Upper lobe of right lung (tissue), 1 donor: ENCODE measurements at regions of chr6 and their contacts with region 1.

Region 1: GRCh38 chr6:44096612-44097011 is 30.6 kb downstream of the MRPL14 start:
- DNase-seq: peak; percentile 82
- ATAC-seq: peak; percentile 89
- H3K4me3 ChIP-seq: no peak overlapping the region
- H3K27ac ChIP-seq: no peak overlapping the region
- H3K4me1 ChIP-seq: no peaks in the 10 kb centered on the region
- H3K27me3 ChIP-seq: no peaks in the 10 kb centered on the region
- CTCF ChIP-seq: peak; percentile 88

Region 2: DNA sequence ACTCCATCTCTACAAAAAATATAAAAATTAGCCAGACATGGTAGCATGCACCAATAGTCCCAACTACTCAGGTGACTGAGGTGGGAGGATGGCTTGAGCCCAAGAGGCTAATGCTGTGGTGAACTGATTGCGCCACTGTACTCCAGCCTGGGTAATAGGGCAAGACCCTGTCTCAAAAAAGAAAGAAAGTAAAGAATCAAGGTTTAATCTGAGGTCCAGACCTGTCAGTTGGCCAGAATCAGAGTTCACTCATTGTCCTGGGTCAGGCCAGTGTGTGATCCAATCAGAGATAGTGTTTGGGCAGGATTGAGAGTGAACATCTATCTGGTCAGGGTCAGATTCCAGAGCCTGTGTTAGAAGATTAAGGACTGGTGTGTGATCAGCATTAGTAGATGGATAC is 46.2 kb after region 1 on chr6:
- intact Hi-C with region 1: loop called (anchors 5 kb)
- DNase-seq: no peak
- ATAC-seq: no peak
- H3K4me3 ChIP-seq: no peak overlapping the region
- H3K27ac ChIP-seq: no peak overlapping the region
- H3K4me1 ChIP-seq: no peaks in the 10 kb centered on the region
- H3K27me3 ChIP-seq: no peaks in the 10 kb centered on the region
- CTCF ChIP-seq: no peak

Region 3: DNA sequence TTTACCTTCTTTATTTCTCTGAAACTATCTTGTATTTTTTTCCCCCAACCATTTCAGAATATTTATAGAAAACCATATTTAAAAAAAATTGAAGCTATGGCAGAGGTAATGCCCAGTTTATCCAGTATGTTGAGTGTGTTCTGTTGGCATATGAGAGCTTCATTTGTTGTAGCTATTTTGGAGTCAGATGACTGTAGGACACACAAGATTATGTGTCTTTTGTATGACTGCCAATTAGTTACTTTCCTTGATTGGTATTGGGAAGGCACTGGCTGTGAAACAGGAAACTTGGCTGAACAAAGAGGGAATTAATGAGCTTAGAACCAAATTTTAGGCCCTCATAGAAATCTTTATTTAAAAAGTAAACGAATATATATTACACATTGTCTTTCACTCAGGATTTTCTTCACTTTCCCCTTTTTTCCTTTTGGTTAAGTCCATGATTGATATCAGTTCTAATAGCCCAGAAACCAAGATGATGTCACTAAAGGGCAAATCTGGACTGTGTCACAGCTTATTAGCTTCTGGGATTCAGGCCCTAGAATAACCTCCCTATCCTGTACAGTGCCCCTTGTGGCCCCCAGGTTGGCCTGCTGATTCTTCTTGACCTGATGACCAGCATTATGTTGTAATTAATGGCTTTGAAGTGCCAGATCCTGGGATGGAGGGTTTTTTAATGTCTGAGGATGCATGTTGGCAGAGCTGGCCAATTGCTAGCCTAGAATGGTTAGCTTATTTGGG is 301.0 kb after region 1 on chr6:
- intact Hi-C with region 1: no loop called
- DNase-seq: no peak
- ATAC-seq: no peak
- H3K4me3 ChIP-seq: no peak overlapping the region
- H3K27ac ChIP-seq: no peak overlapping the region
- H3K4me1 ChIP-seq: no peaks in the 10 kb centered on the region
- H3K27me3 ChIP-seq: no peaks in the 10 kb centered on the region
- CTCF ChIP-seq: no peak